Panc1 (cell line): ENCODE measurements at regions of chr12 and their contacts with region 1.

Region 1: DNA sequence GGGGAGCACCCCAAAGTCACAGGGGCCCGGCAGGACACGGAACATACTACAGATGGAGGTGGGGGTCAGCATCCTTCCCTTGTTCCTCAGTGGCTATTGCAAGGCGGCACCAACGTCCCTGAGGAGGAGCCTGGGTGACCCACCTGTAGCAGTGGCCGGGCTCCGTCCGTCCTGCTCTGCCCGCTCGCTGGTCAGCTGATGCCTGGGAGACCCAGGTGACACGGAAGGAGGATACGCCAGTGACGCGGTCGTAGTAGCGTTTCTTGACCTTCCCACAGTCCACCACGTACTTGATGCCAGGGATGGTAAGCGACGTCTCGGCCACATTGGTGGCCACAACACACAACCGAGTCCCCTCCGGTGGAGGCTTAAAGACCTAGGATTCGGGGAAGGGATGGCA is 24.7 kb downstream of the DHX37 start:
- DNase-seq: no peak
- ATAC-seq: no peak
- H3K4me3 ChIP-seq: no peak overlapping the region
- H3K27ac ChIP-seq: no peak overlapping the region
- H3K4me1 ChIP-seq: no peaks in the 10 kb centered on the region
- H3K27me3 ChIP-seq: no peaks in the 10 kb centered on the region
- CTCF ChIP-seq: no peak

Region 2: GRCh38 chr12:124979568-124979967 is 15.3 kb after region 1 on chr12:
- CTCF ChIA-PET with region 1: no interaction called
- POLR2A ChIA-PET with region 1: interaction called, 12 read pairs
- in situ Hi-C with region 1: no loop called
- intact Hi-C with region 1: no loop called
- DNase-seq: no peak
- ATAC-seq: no peak
- H3K4me3 ChIP-seq: no peak overlapping the region
- H3K27ac ChIP-seq: no peak overlapping the region
- H3K4me1 ChIP-seq: no peaks in the 10 kb centered on the region
- H3K27me3 ChIP-seq: no peaks in the 10 kb centered on the region
- CTCF ChIP-seq: no peak

Region 3: DNA sequence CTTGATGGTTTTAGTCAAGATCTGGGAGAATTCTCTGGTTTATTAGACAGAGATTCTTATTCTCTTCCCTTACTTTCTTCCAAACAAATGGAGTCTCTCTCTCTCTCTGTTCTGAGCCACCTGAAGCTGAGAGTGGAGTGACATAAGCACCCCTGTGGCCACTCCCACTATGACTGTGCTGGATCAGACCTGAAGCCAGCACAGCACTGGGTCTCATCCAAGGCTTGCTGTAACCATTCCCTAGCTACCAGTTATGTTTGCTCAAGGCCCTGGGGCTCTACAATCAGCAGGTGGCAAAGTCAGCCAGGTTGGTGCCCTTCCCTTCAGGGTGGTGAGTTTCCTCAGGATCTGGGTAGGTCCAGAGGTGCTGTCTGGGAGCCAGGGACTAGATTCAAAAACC is 669.4 kb after region 1 on chr12:
- CTCF ChIA-PET with region 1: no interaction called
- POLR2A ChIA-PET with region 1: no interaction called
- in situ Hi-C with region 1: no loop called
- intact Hi-C with region 1: no loop called
- DNase-seq: no peak
- ATAC-seq: no peak
- H3K4me3 ChIP-seq: no peak overlapping the region
- H3K27ac ChIP-seq: no peak overlapping the region
- H3K4me1 ChIP-seq: no peaks in the 10 kb centered on the region
- H3K27me3 ChIP-seq: no peaks in the 10 kb centered on the region; the same call in 1 of the 2 replicates
- CTCF ChIP-seq: no peak